Cardiac septum (tissue), 1 donor: ENCODE measurements at regions of chr1 and their contacts with region 1.

Region 1: GRCh38 chr1:198465201-198466144 is 75.0 kb downstream of the ATP6V1G3 start:
- DNase-seq: no peak

Region 2: GRCh38 chr1:197614916-197615692 is 850.4 kb before region 1 on chr1:
- intact Hi-C with region 1: loop called (anchors 5 kb)
- DNase-seq: no peak

Region 3: GRCh38 chr1:197884173-197884572 is 581.3 kb before region 1 on chr1:
- intact Hi-C with region 1: loop called (anchors 10 kb)
- DNase-seq: no peak

Region 4: GRCh38 chr1:198072177-198072576 is 393.3 kb before region 1 on chr1:
- intact Hi-C with region 1: loop called (anchors 5 kb)
- DNase-seq: no peak

Region 5: DNA sequence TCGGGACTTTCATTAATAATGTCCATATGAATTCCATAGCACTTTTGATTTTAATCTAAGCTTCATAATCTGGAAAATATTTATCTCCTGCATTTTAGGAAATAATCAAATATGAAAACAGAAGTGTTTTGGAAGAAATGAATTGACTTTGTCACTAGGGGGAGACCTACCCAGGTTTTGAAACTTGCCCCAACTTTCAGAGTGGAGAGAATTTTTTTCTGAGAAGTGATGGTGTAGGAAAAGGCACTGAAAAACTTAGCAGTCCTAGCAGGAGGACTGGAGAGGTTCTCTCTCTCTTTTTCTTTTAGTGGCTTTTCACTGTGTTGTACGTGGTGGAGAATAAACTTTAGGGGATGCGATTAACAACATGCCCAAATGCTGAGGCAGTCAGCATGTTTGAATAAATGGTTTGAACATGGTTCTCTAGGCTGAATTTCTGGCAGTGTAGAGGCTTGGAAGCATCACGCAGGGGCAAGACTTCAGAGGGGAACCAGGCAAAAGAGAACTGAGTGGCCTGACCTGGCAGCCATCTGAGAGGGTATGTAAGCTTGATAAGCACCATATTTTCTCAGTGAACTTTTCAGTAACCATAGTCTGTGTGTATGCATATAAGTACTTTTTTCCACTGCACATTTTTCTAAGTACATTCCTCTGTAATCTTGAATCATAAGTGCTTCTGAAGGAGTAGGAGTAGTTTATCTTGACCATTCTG is 377.0 kb before region 1 on chr1:
- intact Hi-C with region 1: loop called (anchors 5 kb)
- DNase-seq: no peak

Region 6: GRCh38 chr1:198201956-198202784 is 263.3 kb before region 1 on chr1:
- intact Hi-C with region 1: loop called (anchors 10 kb)
- DNase-seq: peak; percentile 72

Region 7: DNA sequence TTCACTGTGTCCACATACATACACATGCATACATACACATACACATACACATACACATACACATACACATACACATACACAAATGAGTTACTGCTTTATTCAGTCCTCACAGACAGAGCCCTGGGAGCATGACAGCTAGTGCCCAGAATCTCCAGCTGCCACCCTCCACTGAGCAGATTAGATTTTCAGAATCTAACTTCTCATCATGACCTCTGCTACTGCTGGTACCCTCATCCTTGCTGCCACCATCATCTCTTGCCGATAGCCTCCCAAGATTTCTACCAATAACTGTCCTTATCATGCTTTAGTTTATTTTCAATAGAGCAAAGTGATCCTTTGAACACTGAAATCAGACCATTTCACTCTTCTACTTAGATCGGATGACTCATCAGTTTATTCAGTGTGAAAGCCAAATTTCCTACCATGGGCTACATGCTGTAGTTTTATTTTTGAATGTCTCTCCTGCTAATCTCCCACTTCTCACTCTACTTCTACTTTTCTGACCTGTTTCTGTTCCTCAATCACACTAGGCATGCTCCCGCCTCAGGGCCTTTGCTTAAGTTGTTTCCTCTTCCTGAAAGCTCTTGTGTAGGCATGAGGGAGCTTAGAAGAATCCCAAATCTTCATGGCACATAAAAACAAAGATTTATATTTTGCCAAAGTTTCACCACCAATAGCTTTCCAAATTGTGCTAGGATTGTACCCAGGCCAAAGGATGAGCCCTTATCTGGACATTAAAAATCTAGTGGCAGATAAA is 32.1 kb after region 1 on chr1:
- intact Hi-C with region 1: no loop called
- DNase-seq: no peak

Region 8: DNA sequence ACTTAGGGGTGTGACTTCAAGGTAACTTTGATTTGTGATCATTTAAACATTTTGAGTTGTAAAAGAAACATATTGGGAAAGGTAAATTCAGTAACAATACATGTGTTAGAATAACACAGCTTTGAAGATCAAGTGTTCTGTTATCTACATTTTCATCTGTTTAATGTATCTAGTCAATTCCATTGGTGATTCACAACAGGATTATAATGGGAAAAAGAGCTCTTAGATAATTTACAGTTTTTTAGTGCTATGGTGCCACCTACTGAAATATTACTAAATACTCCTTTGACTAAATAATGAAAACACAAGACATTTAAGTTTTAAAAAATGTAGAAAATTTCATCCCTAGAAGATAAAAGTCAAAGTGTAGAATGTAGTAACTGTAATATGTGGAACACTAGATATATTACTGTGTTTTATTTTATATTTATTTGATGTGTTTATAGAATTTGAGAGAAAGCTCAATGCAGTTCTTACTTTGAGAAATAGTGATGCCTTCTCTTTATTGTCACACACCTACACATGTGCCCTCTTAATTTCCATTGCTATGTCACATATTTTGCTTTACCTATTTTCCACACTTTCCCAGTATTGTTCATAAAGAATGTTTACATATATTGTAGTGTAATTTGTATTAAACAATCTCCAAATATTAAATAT is 220.7 kb after region 1 on chr1:
- intact Hi-C with region 1: no loop called
- DNase-seq: no peak